Activated CD4-positive, alpha-beta memory T cell treated with anti-CD3 and anti-CD28 coated beads for 36 hours (primary cell): ENCODE measurements at regions of chr10 and their contacts with region 1.

Region 1: DNA sequence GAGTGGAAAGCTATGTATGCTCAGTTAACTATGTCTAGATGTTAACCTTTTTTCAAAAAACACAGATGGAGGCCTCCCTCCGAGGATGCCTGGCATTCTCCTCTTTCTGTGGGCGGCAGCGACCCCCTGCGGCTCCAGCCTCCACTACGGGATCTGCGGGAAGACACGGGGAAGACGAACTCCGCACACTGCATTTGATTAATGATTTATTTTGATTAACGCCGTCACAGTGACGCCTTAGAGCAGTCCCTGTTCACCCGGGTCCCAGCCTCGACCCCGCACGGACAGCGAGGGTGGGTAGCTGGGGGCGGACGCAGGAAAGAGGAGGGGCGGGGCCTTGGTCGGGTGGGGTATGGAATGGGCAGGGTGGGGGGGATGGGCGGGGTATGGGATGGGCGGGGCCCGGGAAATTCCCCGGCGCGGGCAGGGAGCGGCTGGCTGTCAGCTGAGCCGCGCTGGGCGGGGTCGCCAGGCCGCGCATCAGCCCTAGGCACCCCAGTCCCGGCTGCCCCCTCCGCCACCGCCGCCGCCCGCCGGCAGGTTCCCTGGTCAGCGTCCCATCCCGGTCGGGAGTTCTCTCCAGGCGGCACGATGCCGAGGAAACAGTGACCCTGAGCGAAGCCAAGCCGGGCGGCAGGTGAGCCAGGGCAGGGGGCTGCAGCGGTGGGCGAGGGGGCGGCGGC is at the start of gene OPTN:
- DNase-seq: peak; percentile 87
- H3K4me3 Mint-ChIP-seq: peak within 1 kb of the TSS; percentile 89
- H3K27ac Mint-ChIP-seq: peak within 1 kb of the TSS; percentile 86
- H3K4me1 Mint-ChIP-seq: peaks cover 39% of the 10 kb centered on the region
- H3K27me3 Mint-ChIP-seq: no peaks in the 10 kb centered on the region
- total RNA-seq, gene OPTN: 107 to 113 TPM

Region 2: GRCh38 chr10:12195603-12196506 is 904.0 kb before region 1 on chr10 and contains the starts of genes CDC123 and NUDT5:
- CTCF ChIA-PET with region 1: interaction called, 3 read pairs
- POLR2A ChIA-PET with region 1: no interaction called
- intact Hi-C with region 1: loop called (anchors 5 kb)
- DNase-seq: peak; percentile 93
- H3K4me3 Mint-ChIP-seq: peak within 1 kb of the TSS; percentile 94
- H3K27ac Mint-ChIP-seq: peak within 1 kb of the TSS; percentile 100
- H3K4me1 Mint-ChIP-seq: peaks cover 46% of the 10 kb centered on the region
- H3K27me3 Mint-ChIP-seq: no peaks in the 10 kb centered on the region
- total RNA-seq, gene CDC123: 134 TPM
- total RNA-seq, gene NUDT5: 115 to 118 TPM

Region 3: GRCh38 chr10:12890958-12891357 is 208.8 kb before region 1 on chr10:
- CTCF ChIA-PET with region 1: no interaction called
- POLR2A ChIA-PET with region 1: no interaction called
- intact Hi-C with region 1: no loop called
- DNase-seq: no peak
- H3K4me3 Mint-ChIP-seq: no peak overlapping the region
- H3K27ac Mint-ChIP-seq: no peak overlapping the region
- H3K4me1 Mint-ChIP-seq: no peaks in the 10 kb centered on the region
- H3K27me3 Mint-ChIP-seq: peaks cover 20% of the 10 kb centered on the region

Region 4: GRCh38 chr10:13056456-13057077 is 43.2 kb before region 1 on chr10:
- CTCF ChIA-PET with region 1: no interaction called
- POLR2A ChIA-PET with region 1: no interaction called
- intact Hi-C with region 1: no loop called
- DNase-seq: no peak
- H3K4me3 Mint-ChIP-seq: no peak overlapping the region
- H3K27ac Mint-ChIP-seq: no peak overlapping the region
- H3K4me1 Mint-ChIP-seq: no peaks in the 10 kb centered on the region
- H3K27me3 Mint-ChIP-seq: peaks cover 7% of the 10 kb centered on the region

Region 5: DNA sequence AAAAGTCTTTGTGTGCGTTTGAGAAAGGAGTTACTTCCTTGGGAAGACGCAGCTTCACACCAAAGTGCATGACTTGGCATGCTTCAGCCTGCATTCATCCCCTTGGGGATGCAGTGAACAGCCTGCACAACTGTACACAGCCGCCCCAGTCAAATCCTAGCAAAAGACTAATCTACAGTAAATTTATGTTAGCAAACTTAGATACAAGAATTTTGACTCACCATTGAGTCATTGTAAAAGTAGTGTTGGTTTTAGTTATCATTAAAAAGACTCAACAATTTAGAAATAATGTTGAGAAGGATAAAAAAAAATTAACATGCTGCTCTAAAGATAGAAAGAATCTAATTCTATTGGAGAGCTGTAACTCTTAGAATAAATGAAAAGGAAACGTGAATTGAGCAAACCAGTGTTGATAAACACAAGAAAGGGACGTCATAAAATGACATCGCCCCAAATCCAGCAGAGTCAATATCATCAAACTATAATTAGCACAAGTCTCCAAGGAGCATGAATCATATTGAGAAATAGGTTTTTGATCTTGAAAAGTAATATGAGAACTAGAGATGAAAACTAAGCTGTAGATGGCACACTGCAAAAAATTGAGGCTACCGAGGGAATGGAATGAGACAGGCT is 11.7 kb before region 1 on chr10:
- CTCF ChIA-PET with region 1: interaction called, 13 read pairs
- POLR2A ChIA-PET with region 1: interaction called, 3 read pairs
- intact Hi-C with region 1: loop called (anchors 1 kb)
- DNase-seq: peak; percentile 39
- H3K4me3 Mint-ChIP-seq: no peak overlapping the region
- H3K27ac Mint-ChIP-seq: peak overlapping the region; percentile 15
- H3K4me1 Mint-ChIP-seq: peaks cover 14% of the 10 kb centered on the region
- H3K27me3 Mint-ChIP-seq: peaks cover 6% of the 10 kb centered on the region

Region 6: DNA sequence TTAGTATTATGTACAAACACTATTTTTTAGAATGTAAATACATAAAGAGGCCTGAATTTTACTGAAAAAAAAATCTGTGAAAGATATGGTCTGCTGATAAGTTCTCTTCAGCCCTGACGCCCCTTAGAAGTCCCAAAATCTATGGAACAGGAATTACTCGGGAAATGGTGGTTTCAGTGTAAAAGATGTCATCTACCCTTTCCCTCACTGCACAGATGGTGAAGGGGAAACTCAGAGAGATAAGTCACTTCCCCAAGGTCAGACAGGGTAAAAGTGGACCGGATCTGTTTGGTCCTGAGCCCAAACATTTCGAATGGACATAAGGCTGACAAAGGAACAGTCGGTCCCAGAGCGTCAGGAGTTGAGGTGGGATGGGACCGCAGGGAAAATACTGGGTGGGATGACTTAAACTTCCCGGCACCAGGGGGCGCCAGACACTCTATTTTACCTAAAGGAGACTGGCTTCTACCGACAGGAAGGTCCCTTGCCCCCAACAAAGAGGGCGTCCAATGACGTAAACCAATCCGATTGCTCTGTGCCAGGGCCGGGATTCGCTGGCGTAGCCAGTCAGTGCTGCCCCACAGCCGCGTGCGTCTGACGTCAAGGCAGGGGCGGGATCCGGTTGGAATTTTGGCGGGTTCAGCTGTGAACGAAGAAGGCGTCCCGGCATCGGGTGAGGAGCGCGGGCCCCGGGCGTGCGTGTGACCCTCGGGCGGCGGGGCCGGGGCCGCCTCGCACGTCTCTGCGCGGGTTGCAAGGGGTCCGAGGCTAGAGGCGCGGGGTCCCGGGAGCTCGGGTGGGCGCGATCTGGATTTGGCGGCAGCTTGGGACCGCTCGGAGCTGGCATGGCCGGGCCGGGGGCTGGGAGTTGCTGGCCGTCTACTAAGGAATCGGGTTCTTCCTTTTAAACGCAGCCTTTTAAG is 61.4 kb after region 1 on chr10 and contains the start of gene MCM10:
- CTCF ChIA-PET with region 1: interaction called, 6 read pairs
- POLR2A ChIA-PET with region 1: no interaction called
- intact Hi-C with region 1: loop called (anchors 1 kb)
- DNase-seq: peak; percentile 99
- H3K4me3 Mint-ChIP-seq: peak within 1 kb of the TSS; percentile 85
- H3K27ac Mint-ChIP-seq: peak within 1 kb of the TSS; percentile 34
- H3K4me1 Mint-ChIP-seq: peaks cover 28% of the 10 kb centered on the region
- H3K27me3 Mint-ChIP-seq: no peaks in the 10 kb centered on the region
- total RNA-seq, gene MCM10: 70.6 to 74.2 TPM

Region 7: DNA sequence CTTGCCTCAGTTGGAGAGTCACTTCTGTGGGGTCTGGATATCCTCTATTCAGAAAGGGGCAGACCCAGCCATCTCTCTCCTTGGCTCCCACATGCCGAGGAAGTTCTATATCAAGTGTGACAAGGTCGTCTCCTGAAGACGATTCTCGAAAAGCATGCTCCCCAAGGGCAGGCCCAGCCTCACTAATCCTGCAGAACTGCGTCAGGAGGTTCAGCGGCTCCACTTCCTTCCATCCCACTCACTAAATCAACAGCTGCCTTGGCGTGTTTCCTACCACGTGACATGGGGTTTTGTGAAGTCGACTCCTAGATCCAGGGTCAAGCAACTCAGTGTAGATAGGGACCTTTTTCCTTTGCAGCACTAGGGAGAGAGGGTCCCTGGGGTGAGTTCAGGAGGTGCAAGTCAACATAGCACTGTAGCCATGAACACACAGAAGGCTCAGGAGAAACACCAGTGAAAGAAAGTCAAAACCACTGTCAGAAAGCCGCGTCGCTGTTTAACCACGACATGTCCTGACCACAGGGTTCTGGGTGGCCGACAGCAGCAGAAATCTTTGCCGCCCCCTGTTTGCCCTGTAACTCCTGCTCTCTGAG is 643.4 kb after region 1 on chr10:
- CTCF ChIA-PET with region 1: no interaction called
- POLR2A ChIA-PET with region 1: no interaction called
- intact Hi-C with region 1: no loop called
- DNase-seq: no peak
- H3K4me3 Mint-ChIP-seq: no peak overlapping the region
- H3K27ac Mint-ChIP-seq: no peak overlapping the region
- H3K4me1 Mint-ChIP-seq: peaks cover 10% of the 10 kb centered on the region
- H3K27me3 Mint-ChIP-seq: peaks cover 20% of the 10 kb centered on the region